Lower lobe of right lung (tissue), 2 donors: ENCODE measurements at regions of chr1 and their contacts with region 1.

Region 1: GRCh38 chr1:205523891-205524793 is 19.7 kb downstream of the CDK18 start:
- DNase-seq: peak; percentile 73
- ATAC-seq: peak; percentile 47 to 67
- H3K4me3 ChIP-seq: no peak overlapping the region
- H3K27ac ChIP-seq: no peak overlapping the region
- H3K4me1 ChIP-seq: peaks cover 6% of the 10 kb centered on the region
- H3K27me3 ChIP-seq: no peaks in the 10 kb centered on the region
- CTCF ChIP-seq: peak; percentile 76

Region 2: GRCh38 chr1:205485338-205486228 is 38.6 kb before region 1 on chr1:
- intact Hi-C with region 1: loop called (anchors 5 kb)
- DNase-seq: peak; percentile 67
- ATAC-seq: peak; percentile 86 to 89
- H3K4me3 ChIP-seq: no peak overlapping the region
- H3K27ac ChIP-seq: no peak overlapping the region
- H3K4me1 ChIP-seq: no peaks in the 10 kb centered on the region
- H3K27me3 ChIP-seq: peaks cover 23% of the 10 kb centered on the region
- CTCF ChIP-seq: peak; percentile 97

Region 3: GRCh38 chr1:205763980-205764379 is 239.8 kb after region 1 on chr1:
- intact Hi-C with region 1: no loop called
- DNase-seq: no peak
- ATAC-seq: no peak
- H3K4me3 ChIP-seq: no peak overlapping the region
- H3K27ac ChIP-seq: no peak overlapping the region
- H3K4me1 ChIP-seq: no peaks in the 10 kb centered on the region
- H3K27me3 ChIP-seq: no peaks in the 10 kb centered on the region
- CTCF ChIP-seq: no peak